ENCODE measurements at regions of chr4 and their contacts with region 1.

Region 1: GRCh38 chr4:78864405-78865024 is 74.7 kb downstream of the PAQR3 start:
- DNase-seq: no peak
- H3K4me3 ChIP-seq: no peak overlapping the region
- H3K27ac ChIP-seq: no peak overlapping the region
- H3K4me1 ChIP-seq: no peaks in the 10 kb centered on the region
- H3K27me3 ChIP-seq: no peaks in the 10 kb centered on the region
- CTCF ChIP-seq: peak; percentile 31 to 77 (median 54)

Region 2: DNA sequence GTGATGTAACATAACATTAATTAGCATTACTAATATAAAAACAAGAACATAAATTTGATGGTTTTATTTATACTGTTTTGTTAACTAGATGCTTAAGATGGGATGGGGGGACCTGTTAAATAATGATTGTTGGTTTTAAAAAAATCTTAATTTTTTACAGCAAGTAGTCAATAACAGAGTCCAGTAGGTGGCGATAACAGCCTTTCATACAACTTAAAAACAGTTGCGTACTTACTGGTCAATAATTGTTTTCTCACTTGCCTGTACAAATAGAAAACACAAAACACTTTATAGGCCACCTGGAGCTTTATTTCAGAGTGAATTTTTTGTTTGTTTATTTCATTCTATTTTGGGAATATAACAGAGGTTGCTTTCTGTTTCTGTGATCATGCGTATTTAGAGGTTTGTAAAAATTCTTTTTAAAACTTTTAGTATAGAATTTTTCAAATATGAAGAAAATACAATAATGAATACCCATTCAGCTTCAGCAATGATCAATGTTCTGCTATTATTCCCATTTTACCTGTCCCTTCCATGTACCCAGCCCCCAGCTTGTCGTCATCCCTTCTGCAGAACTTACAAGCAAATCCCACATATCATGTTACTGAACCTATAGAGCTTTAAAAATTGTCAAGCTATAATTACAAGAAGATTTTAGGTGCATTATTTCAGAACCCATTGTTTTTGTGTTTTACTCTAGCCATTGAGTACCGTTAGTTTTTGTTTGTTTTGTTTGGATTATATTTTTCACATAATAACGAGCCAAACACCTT is 904.8 kb before region 1 on chr4:
- intact Hi-C with region 1: loop called (anchors 10 kb)
- DNase-seq: no peak
- H3K4me3 ChIP-seq: peak overlapping the region in 1 of 2 donors; percentile 25
- H3K27ac ChIP-seq: no peak overlapping the region
- H3K4me1 ChIP-seq: no peaks in the 10 kb centered on the region
- H3K27me3 ChIP-seq: no peaks in the 10 kb centered on the region
- CTCF ChIP-seq: peak; percentile 24 to 59 (median 46)

Region 3: GRCh38 chr4:78320349-78320935 is 544.1 kb before region 1 on chr4:
- intact Hi-C with region 1: no loop called
- DNase-seq: no peak
- H3K4me3 ChIP-seq: no peak overlapping the region
- H3K27ac ChIP-seq: no peak overlapping the region
- H3K4me1 ChIP-seq: no peaks in the 10 kb centered on the region
- H3K27me3 ChIP-seq: no peaks in the 10 kb centered on the region
- CTCF ChIP-seq: no peak

Region 4: GRCh38 chr4:78612398-78613178 is 251.9 kb before region 1 on chr4:
- intact Hi-C with region 1: loop called (anchors 1 kb)
- DNase-seq: no peak
- H3K4me3 ChIP-seq: no peak overlapping the region
- H3K27ac ChIP-seq: no peak overlapping the region
- H3K4me1 ChIP-seq: no peaks in the 10 kb centered on the region
- H3K27me3 ChIP-seq: no peaks in the 10 kb centered on the region
- CTCF ChIP-seq: peak; percentile 36 to 62 (median 41)

Measured in ascending aorta (tissue), 2 donors.